Colonic mucosa (tissue), 4 donors: ENCODE measurements at regions of chr6 and their contacts with region 1.

Region 1: GRCh38 chr6:107674995-107675738 is 148.9 kb downstream of the SCML4 start:
- DNase-seq: peak; percentile 85
- H3K4me3 ChIP-seq: no peak overlapping the region
- H3K27ac ChIP-seq: no peak overlapping the region
- H3K4me1 ChIP-seq: no peaks in the 10 kb centered on the region
- H3K27me3 ChIP-seq: no peaks in the 10 kb centered on the region
- CTCF ChIP-seq: peak; percentile 81

Region 2: DNA sequence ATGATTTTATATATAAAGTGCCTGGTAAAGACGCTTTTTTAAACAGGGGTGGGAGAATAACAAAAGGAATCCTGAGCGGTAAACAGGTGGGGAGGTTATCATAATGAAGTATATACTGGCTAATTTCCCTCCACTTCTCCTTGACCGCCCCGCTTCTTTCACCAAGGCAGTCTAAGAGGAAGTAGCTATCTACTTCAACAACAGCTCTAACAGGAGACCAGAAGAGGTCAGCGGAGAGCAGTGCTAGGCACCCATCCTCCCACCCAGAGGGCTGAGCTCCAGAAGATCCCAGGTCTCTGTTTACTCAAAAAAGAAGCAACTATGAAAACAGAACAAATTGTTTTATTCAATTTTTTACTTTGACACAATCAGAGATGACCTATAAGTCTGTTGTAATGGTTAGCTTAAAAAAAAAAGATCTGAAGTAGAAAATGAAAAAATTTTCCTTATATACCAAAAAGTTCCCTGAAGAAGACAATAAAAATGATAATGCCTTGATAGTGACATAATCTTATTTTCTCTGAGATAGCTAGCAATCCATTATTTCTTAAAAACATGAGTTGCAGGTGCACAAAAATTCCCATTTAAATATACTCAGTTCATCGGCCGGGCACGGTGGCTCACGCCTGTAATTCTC is 356.9 kb before region 1 on chr6:
- intact Hi-C with region 1: loop called (anchors 10 kb)
- DNase-seq: peak; percentile 55
- H3K4me3 ChIP-seq: no peak overlapping the region
- H3K27ac ChIP-seq: no peak overlapping the region
- H3K4me1 ChIP-seq: no peaks in the 10 kb centered on the region
- H3K27me3 ChIP-seq: no peaks in the 10 kb centered on the region
- CTCF ChIP-seq: peak; percentile 53

Region 3: GRCh38 chr6:107832151-107833056 is 157.2 kb after region 1 on chr6:
- intact Hi-C with region 1: no loop called
- DNase-seq: no peak
- H3K4me3 ChIP-seq: no peak overlapping the region
- H3K27ac ChIP-seq: no peak overlapping the region
- H3K4me1 ChIP-seq: no peaks in the 10 kb centered on the region
- H3K27me3 ChIP-seq: no peaks in the 10 kb centered on the region
- CTCF ChIP-seq: no peak

Region 4: DNA sequence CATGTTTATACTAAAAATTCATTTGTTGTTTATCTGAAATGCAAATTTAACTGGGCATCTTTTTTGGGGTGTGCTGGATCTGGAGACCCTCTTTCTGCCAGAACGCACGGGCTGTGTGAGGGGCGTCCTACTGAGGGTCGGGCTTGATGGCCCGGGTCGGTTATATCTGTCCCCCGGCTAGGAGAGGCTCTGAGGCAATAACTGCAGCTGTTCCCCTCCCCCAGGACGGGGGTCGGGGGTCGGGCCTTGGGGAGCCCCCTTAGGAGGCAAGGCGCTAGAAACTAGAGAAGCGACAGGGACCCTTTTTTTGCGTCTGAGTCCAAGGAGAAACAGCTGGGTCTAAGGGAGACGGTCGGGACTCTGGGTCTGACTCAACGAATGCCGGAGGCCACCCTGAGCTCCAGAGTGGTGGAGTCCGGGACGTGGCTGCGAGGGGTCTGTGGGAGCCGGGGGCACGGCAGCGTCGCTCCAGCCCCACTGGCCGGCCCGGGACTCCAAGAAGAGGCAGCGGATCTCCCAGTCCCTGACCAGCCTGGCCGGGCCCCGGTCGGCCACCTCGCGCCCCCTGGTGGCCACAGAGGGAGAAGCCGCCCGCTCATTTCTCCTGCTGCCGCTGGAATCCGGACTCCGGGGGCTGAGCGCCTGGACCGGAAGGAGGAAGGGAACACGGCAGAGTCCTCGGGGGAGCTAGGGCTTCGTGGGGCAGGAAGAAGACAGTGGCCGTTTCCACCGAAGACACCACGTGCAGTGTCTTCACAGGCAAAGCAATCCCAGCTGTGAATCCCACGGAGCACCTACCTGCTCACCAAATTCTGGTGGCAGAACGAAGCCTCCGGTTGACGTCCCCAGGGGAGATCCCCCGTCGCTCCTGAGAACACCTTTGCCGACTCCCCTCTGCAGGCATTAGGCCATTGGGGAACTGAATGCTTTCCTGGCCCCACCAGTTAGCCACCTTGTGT is 173.0 kb after region 1 on chr6:
- intact Hi-C with region 1: loop called (anchors 5 kb)
- DNase-seq: peak; percentile 87
- H3K4me3 ChIP-seq: peak overlapping the region; percentile 22
- H3K27ac ChIP-seq: no peak overlapping the region
- H3K4me1 ChIP-seq: no peaks in the 10 kb centered on the region
- H3K27me3 ChIP-seq: no peaks in the 10 kb centered on the region
- CTCF ChIP-seq: peak; percentile 94

Region 5: DNA sequence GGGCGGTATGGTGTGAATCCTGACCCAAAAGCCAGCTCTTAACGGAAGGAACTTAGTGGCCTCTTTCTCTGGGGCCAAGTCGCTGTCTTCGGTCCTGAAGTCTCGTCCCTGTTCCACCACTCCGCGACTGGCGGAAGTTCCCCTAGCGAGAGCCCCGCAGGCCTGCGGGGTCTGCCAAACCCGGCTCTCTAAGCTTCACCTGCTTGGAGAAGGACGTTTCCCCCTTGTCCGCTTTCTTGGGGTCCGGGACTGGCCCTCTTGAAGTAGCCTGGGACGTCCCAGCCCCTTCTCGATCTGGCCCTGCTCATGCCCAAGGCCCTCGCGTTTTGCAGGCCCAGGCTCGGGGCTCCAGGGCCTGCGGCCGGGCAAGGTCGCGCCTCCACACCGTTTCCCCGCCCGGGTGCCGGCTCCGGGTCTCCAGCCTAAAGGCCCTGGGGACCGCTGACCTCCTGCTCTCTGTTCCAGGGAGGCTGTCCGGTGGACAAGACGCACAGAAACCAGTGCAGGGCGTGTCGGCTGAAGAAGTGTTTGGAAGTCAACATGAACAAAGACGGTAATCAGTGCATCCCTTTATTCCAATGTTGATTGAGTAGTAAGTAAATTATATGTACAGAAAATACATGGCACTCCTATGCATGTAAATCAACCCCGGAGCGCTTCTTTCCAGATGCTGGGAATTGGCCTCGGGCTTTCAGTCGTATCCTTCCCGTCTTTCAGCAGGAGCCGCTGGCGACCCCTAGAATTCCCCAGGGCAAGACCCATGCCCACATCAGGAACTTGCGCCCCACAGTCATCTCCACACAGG is 499.4 kb after region 1 on chr6:
- intact Hi-C with region 1: no loop called
- DNase-seq: no peak
- H3K4me3 ChIP-seq: no peak overlapping the region
- H3K27ac ChIP-seq: no peak overlapping the region
- H3K4me1 ChIP-seq: peaks cover 6% of the 10 kb centered on the region
- H3K27me3 ChIP-seq: peaks cover 80% of the 10 kb centered on the region
- CTCF ChIP-seq: no peak